ENCODE measurements at regions of chr6 and their contacts with region 1.

Region 1: DNA sequence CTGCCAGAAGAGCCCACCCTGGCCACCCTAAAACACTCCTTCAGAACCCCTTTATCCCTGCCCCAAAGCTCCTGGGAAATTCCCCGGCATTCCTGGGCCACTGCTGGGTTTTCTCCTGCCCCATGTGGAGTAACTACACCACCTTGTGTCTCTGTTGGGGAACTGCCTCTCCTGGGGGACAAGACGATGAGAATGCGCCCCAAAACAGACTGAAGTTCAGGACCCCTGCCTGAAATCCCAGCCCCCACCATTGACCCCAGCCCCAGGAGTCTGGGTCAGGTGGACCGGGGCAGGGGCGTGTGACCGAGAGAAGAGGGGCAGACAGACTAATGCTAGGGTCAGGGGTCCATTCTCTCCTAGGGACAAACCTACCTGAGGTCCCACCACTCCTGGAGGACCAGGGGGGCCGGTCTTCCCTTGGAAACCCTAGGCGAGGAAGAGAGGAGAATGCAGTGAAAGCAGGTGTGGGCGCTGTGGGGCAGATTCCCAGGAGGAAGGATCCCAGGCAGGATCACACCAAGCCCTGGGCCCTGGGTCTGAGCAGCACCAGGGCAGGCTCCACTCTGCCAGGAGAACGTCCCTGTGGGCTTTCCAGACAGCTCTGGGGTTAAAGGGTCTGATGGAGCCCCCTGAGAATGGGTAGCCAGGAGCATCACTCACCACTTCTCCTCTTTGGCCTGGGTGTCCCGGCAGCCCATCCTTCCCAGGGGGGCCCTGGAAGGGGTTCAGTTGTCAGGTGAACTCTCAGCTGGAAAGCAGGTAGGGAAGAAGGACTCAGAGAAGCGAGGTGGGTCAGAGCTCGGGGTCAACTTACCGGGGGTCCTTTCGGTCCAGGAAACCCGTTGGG is 19.4 kb downstream of the COL11A2 start:
- DNase-seq: peak; percentile 73
- H3K27ac ChIP-seq: no peak overlapping the region
- CTCF ChIP-seq: peak; percentile 65

Region 2: GRCh38 chr6:33014841-33015634 is 157.9 kb before region 1 on chr6:
- CTCF ChIA-PET with region 1: interaction called, 15 read pairs
- POLR2A ChIA-PET with region 1: no interaction called
- DNase-seq: peak; percentile 64
- H3K27ac ChIP-seq: no peak overlapping the region
- CTCF ChIP-seq: peak; percentile 72

Region 3: DNA sequence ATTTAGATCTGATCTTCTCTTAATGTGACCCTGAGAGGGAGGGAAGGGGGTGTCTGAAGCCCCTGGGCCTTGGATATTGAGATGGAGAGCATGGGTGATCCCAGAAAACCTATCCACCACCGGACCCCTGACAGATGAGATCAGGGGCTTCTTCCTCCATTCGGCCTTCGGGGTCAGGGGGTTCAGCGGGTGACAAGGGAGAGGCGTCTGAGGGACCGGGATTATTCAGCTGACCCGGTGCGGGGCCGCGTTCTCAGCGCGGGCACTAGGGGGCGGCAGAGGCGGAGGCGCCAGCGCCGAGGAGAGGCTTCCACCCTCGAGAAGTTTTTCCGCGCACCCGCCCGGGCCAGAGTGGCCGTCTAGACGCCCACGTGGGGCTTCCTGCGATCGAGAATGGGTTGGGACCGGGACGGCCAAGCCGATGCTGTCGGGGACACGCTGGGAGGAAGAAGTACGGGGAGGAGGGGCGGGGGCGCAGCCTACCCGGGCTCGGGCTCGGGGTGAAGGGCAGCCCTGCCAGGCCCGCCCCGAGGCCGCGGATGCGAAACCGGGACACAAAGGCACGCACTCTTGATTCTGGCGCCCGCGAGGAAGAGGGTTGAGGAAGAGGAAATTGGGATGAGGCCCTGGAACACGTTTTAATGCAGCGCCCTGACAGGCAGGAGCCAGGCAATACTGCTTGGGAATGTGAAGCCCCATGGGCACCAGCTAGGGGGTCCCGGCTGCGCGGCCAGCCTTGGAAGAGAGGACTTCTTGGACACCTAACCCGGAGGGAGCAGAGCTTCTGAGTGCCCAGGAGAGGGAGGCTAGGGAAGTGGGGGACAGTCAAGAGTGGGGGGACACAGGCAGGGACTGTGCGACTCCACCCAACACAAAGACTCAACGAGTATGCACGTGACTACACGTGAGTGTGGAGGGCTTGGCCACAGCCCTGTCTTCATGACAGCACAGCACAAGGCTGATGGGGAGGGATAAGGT is 11.3 kb before region 1 on chr6:
- CTCF ChIA-PET with region 1: interaction called, 18 read pairs
- POLR2A ChIA-PET with region 1: no interaction called
- DNase-seq: peak; percentile 76
- H3K27ac ChIP-seq: peak overlapping the region; percentile 86
- CTCF ChIP-seq: peak; percentile 93